Transverse colon (tissue), 4 donors: ENCODE measurements at regions of chr13 and their contacts with region 1.

Region 1: GRCh38 chr13:108895220-108895704 is 265.9 kb downstream of the MYO16 start:
- DNase-seq: no peak
- H3K4me3 ChIP-seq: no peak overlapping the region
- H3K27ac ChIP-seq: no peak overlapping the region
- H3K4me1 ChIP-seq: no peaks in the 10 kb centered on the region
- H3K27me3 ChIP-seq: no peaks in the 10 kb centered on the region
- CTCF ChIP-seq: peak; percentile 44 to 61 (median 54)
- EP300 ChIP-seq: no peak
- POLR2A ChIP-seq: no peak

Region 2: GRCh38 chr13:108227651-108228272 is 667.5 kb before region 1 on chr13:
- in situ Hi-C with region 1: no loop called
- intact Hi-C with region 1: loop called (anchors 10 kb)
- DNase-seq: no peak
- H3K4me3 ChIP-seq: no peak overlapping the region
- H3K27ac ChIP-seq: no peak overlapping the region
- H3K4me1 ChIP-seq: peaks cover 0 to 16% (median 0%) of the 10 kb centered on the region in 4 donors
- H3K27me3 ChIP-seq: no peaks in the 10 kb centered on the region
- CTCF ChIP-seq: peak; percentile 57 to 84 (median 77)
- EP300 ChIP-seq: no peak
- POLR2A ChIP-seq: no peak

Region 3: GRCh38 chr13:108322206-108322824 is 572.9 kb before region 1 on chr13:
- in situ Hi-C with region 1: loop called (anchors 10 kb)
- intact Hi-C with region 1: no loop called
- DNase-seq: no peak
- H3K4me3 ChIP-seq: no peak overlapping the region
- H3K27ac ChIP-seq: no peak overlapping the region
- H3K4me1 ChIP-seq: peaks cover 0 to 14% (median 8%) of the 10 kb centered on the region in 4 donors
- H3K27me3 ChIP-seq: no peaks in the 10 kb centered on the region
- CTCF ChIP-seq: peak; percentile 61 to 81 (median 64)
- EP300 ChIP-seq: no peak
- POLR2A ChIP-seq: no peak

Region 4: GRCh38 chr13:108342369-108343289 is 552.6 kb before region 1 on chr13:
- in situ Hi-C with region 1: no loop called
- intact Hi-C with region 1: loop called (anchors 10 kb)
- DNase-seq: no peak
- H3K4me3 ChIP-seq: no peak overlapping the region
- H3K27ac ChIP-seq: no peak overlapping the region
- H3K4me1 ChIP-seq: no peaks in the 10 kb centered on the region
- H3K27me3 ChIP-seq: no peaks in the 10 kb centered on the region
- CTCF ChIP-seq: peak in 3 of 5 experiments; percentile 14 to 39 (median 26)
- EP300 ChIP-seq: no peak
- POLR2A ChIP-seq: no peak

Region 5: GRCh38 chr13:108609353-108609752 is 285.9 kb before region 1 on chr13:
- in situ Hi-C with region 1: loop called in 1 of 4 experiments (anchors 25 kb)
- intact Hi-C with region 1: no loop called
- DNase-seq: no peak
- H3K4me3 ChIP-seq: no peak overlapping the region
- H3K27ac ChIP-seq: no peak overlapping the region
- H3K4me1 ChIP-seq: no peaks in the 10 kb centered on the region
- H3K27me3 ChIP-seq: no peaks in the 10 kb centered on the region
- CTCF ChIP-seq: peak in 3 of 5 experiments; percentile 14 to 38 (median 20)
- EP300 ChIP-seq: no peak
- POLR2A ChIP-seq: no peak

Region 6: DNA sequence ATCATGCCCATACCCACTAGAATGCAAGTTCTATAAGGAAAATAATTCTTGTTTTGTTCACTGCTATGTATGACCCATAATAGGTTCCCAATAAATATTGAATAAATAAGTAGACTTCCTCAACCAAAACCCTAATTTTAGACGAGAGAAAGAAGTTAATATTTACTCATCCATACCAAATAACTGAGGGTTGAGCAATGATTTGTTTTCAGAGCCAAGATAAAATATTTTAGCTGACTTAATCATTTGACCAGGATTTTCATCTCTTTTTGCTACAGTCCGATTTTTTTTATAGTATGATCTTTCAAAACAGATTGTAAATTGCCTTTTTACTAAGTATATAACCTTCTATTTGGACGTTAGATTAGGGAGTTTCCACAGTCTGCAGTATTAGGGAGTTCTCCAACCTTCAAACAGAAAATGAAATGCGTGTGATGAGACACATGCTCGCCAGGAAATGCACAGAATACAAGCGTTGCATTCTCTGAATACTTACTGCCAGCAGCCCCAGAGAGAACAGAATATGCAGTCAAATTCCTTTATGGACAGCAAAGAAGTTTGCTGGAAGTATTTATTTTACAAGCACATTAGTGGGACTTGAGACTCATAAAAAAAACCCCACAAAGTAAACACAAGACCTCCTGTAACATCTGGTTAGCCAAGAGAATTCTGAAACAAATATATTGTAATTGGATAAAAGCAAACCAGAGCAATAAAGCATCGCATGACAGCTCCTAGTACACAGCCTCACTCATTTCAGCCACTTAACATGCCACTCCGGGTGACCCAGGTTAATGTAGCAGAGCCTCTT is 35.9 kb before region 1 on chr13:
- in situ Hi-C with region 1: no loop called
- intact Hi-C with region 1: no loop called
- DNase-seq: no peak
- H3K4me3 ChIP-seq: no peak overlapping the region
- H3K27ac ChIP-seq: peak overlapping the region in 1 of 4 donors; percentile 1
- H3K4me1 ChIP-seq: peaks cover 0 to 9% (median 2%) of the 10 kb centered on the region in 4 donors
- H3K27me3 ChIP-seq: no peaks in the 10 kb centered on the region
- CTCF ChIP-seq: no peak
- EP300 ChIP-seq: no peak
- POLR2A ChIP-seq: no peak

Region 7: DNA sequence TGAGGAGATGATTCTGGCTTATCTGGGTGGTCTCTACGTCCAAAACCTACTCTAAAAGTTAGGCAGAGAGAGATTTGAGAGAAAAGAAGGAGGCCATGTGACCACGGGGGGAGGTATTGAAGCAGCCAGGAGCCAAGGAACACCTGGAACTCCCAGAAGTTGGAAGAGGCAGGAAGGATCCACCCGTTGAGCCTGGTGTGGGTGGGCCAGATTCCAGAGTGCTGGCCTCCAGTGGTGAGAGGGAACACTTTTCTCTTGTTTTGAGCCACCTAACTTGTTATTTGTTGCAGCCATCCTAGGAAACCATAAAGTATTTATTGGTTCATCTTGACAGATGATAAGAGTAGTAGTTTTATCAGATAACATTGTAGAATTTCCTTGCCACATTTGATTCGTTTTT is 131.0 kb after region 1 on chr13:
- in situ Hi-C with region 1: no loop called
- intact Hi-C with region 1: no loop called
- DNase-seq: no peak
- H3K4me3 ChIP-seq: no peak overlapping the region
- H3K27ac ChIP-seq: no peak overlapping the region
- H3K4me1 ChIP-seq: no peaks in the 10 kb centered on the region
- H3K27me3 ChIP-seq: no peaks in the 10 kb centered on the region
- CTCF ChIP-seq: no peak
- EP300 ChIP-seq: no peak
- POLR2A ChIP-seq: no peak

Region 8: GRCh38 chr13:109131698-109132257 is 236.5 kb after region 1 on chr13:
- in situ Hi-C with region 1: no loop called
- intact Hi-C with region 1: no loop called
- DNase-seq: no peak
- H3K4me3 ChIP-seq: no peak overlapping the region
- H3K27ac ChIP-seq: peak overlapping the region in 1 of 4 donors; percentile 2
- H3K4me1 ChIP-seq: peaks cover 0 to 3% (median 0%) of the 10 kb centered on the region in 4 donors
- H3K27me3 ChIP-seq: no peaks in the 10 kb centered on the region
- CTCF ChIP-seq: no peak
- EP300 ChIP-seq: no peak
- POLR2A ChIP-seq: no peak